PC-3 (cell line): ENCODE measurements at regions of chr16 and their contacts with region 1.

Region 1: DNA sequence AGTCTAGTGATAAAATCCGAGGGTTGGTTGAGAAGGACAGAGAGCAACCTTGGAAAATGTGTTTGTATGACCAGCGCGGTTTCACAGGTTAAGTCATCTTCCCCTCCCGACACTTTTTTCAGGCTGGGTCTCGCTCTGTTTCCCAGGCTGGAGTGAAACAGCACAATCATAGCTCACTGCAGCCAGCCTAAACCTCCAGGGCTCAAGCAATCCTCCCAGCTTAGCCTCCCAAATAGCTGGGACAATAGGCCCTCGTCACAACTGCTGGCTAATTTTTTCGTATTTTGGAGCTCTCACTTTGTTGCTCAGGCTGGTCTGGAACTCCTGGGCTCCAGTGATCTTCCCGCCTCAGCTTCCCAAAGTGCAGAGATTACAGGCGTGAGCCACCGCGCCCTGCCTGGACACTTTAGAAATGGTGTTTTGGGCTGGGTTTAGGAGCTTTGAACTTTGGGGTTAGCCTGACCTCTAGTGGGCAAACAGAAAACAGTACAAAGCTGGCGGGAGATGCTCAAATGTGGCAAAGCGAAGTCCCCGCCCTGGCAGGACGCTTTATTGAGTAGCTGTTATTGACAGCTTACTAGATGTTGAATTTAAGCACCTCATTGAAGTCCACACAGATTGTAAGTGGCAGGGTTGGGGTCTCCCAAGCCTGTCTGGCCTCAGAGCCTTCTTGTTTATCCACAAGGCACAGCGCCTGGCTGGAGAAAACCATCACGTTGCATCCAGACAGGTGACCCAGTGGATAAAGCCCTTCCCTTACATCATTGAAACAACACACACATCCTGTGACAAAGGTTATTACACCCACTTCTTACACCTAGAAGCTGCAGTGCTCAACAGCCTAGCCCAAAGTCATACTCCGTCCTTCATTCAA is 34.7 kb upstream of the RBBP6 start:
- DNase-seq: peak; percentile 72
- ATAC-seq: peak; percentile 97
- H3K4me3 ChIP-seq: no peak overlapping the region
- H3K27ac ChIP-seq: no peak overlapping the region
- H3K4me1 ChIP-seq: no peaks in the 10 kb centered on the region
- H3K27me3 ChIP-seq: no peaks in the 10 kb centered on the region
- CTCF ChIP-seq: peak; percentile 73

Region 2: GRCh38 chr16:23803591-23804123 is 701.1 kb before region 1 on chr16:
- CTCF ChIA-PET with region 1: no interaction called
- POLR2A ChIA-PET with region 1: no interaction called
- intact Hi-C with region 1: loop called (anchors 10 kb)
- DNase-seq: peak; percentile 44
- ATAC-seq: peak; percentile 70
- H3K4me3 ChIP-seq: no peak overlapping the region
- H3K27ac ChIP-seq: no peak overlapping the region
- H3K4me1 ChIP-seq: no peaks in the 10 kb centered on the region
- H3K27me3 ChIP-seq: peaks cover 6% of the 10 kb centered on the region; the same call in 1 of the 2 replicates
- CTCF ChIP-seq: peak; percentile 59

Region 3: DNA sequence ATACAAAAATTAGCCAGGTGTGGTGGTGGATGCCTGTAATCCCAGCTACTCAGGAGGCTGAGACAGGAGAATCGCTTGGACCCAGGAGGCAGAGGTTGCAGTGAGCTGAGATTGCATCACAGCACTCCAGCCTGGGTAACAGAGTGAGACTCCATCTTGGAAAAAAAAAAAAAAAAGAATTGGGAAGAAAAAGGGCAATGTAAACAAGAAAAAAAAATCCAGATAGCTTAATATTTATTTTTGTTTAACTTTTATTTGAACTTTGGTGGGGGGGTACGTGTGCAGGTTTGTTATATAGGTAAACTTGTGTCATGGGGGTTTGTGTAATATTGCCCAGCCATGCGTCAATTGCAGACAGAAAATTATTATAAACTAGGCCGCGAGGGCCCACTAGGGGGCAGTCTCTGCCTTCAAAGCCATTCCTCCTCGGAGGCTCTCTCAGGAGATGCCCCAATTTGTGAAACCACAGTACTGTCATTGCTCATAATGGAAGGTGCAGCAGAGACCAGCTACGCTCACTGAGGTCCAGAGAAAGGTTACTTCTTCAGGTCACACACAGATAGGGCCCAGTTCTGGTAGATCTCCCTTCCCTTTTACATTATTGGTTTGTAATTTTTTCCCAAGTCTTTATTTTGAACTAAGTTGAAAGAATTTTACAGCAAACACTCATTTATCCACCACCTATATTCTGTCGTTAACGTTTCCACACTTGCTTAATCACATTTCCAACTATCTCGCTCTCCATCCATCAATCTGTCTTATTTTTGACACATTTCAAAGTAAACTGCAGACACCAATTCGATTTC is 462.7 kb before region 1 on chr16:
- CTCF ChIA-PET with region 1: interaction called, 3 read pairs
- POLR2A ChIA-PET with region 1: no interaction called
- intact Hi-C with region 1: loop called (anchors 1 kb)
- DNase-seq: peak; percentile 71
- ATAC-seq: peak; percentile 66
- H3K4me3 ChIP-seq: no peak overlapping the region
- H3K27ac ChIP-seq: no peak overlapping the region
- H3K4me1 ChIP-seq: no peaks in the 10 kb centered on the region
- H3K27me3 ChIP-seq: no peaks in the 10 kb centered on the region
- CTCF ChIP-seq: peak; percentile 78

Region 4: DNA sequence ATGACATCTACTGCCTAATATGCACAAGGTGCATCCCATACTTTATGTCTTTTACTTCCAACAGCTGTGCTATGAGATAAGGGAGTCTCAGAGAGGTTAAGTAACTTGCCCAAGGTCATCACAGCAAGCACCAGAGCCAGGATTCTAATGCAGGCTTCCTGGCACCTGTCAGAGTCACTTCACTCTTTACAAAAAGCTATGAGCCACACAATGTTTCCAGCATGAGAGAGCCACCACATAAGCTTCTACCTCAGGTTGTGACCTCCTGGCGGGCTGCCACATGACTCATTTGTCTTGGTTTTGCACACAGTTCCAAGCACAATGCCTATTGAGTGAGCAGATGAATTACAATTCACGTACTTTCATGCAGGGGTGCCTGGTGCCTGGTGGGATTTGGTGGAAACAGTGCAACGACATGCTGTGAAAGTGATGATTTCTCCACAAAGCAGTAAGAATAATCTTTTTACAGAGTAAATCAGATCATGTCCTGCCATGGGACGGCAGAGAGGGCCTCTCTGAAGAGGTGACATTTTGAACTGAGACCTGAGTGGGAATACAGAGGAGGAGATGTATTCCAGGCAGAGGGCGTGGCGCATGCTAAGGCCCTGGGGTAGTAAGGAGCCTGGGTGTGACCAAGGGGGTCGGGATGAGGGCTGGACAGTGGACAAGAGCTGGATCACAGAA is 195.3 kb before region 1 on chr16:
- CTCF ChIA-PET with region 1: no interaction called
- POLR2A ChIA-PET with region 1: no interaction called
- intact Hi-C with region 1: loop called (anchors 5 kb)
- DNase-seq: peak; percentile 77
- ATAC-seq: no peak
- H3K4me3 ChIP-seq: no peak overlapping the region
- H3K27ac ChIP-seq: no peak overlapping the region
- H3K4me1 ChIP-seq: peaks cover 4% of the 10 kb centered on the region; the same call in 1 of the 2 replicates
- H3K27me3 ChIP-seq: peaks cover 5% of the 10 kb centered on the region; the same call in 1 of the 2 replicates
- CTCF ChIP-seq: no peak

Region 5: GRCh38 chr16:24409049-24409448 is 95.7 kb before region 1 on chr16:
- CTCF ChIA-PET with region 1: interaction called, 4 read pairs
- POLR2A ChIA-PET with region 1: no interaction called
- intact Hi-C with region 1: loop called (anchors 1 kb)
- DNase-seq: peak; percentile 29
- ATAC-seq: 0 out of 2 replicates have a peak, but pooled peaks have one; percentile 40
- H3K4me3 ChIP-seq: no peak overlapping the region
- H3K27ac ChIP-seq: no peak overlapping the region
- H3K4me1 ChIP-seq: no peaks in the 10 kb centered on the region
- H3K27me3 ChIP-seq: peaks cover 19% of the 10 kb centered on the region
- CTCF ChIP-seq: peak; percentile 47